Prostate gland (tissue), 2 donors: ENCODE measurements at regions of chr16 and their contacts with region 1.

Region 1: GRCh38 chr16:69116906-69117305 is 11.5 kb downstream of the HAS3 start:
- DNase-seq: no peak
- H3K4me3 ChIP-seq: no peak overlapping the region
- H3K27ac ChIP-seq: no peak overlapping the region
- H3K4me1 ChIP-seq: no peaks in the 10 kb centered on the region
- H3K27me3 ChIP-seq: no peaks in the 10 kb centered on the region
- CTCF ChIP-seq: no peak
- POLR2A ChIP-seq: no peak

Region 2: GRCh38 chr16:68907781-68908181 is 209.1 kb before region 1 on chr16:
- intact Hi-C with region 1: loop called (anchors 5 kb)
- DNase-seq: no peak
- H3K4me3 ChIP-seq: no peak overlapping the region
- H3K27ac ChIP-seq: peak overlapping the region; percentile 29 to 31
- H3K4me1 ChIP-seq: peaks cover 3% of the 10 kb centered on the region
- H3K27me3 ChIP-seq: no peaks in the 10 kb centered on the region
- CTCF ChIP-seq: no peak
- POLR2A ChIP-seq: no peak